ENCODE measurements at regions of chr10 and their contacts with region 1.

Region 1: GRCh38 chr10:68697106-68697505 is 23.9 kb upstream of the CCAR1 start:
- DNase-seq: no peak
- CTCF ChIP-seq: no peak

Region 2: GRCh38 chr10:68668972-68669371 is 28.1 kb before region 1 on chr10:
- CTCF ChIA-PET with region 1: no interaction called
- POLR2A ChIA-PET with region 1: no interaction called
- DNase-seq: no peak
- CTCF ChIP-seq: no peak

Region 3: GRCh38 chr10:68684413-68684812 is 12.7 kb before region 1 on chr10:
- CTCF ChIA-PET with region 1: interaction called, 15 read pairs
- POLR2A ChIA-PET with region 1: no interaction called
- DNase-seq: peak; percentile 48
- CTCF ChIP-seq: no peak

Region 4: GRCh38 chr10:68792115-68792514 is 95.0 kb after region 1 on chr10:
- CTCF ChIA-PET with region 1: no interaction called
- POLR2A ChIA-PET with region 1: no interaction called
- DNase-seq: no peak
- CTCF ChIP-seq: no peak

Region 5: GRCh38 chr10:68981074-68981473 is 284.0 kb after region 1 on chr10:
- CTCF ChIA-PET with region 1: no interaction called
- POLR2A ChIA-PET with region 1: no interaction called
- DNase-seq: no peak
- CTCF ChIP-seq: peak; percentile 13